ENCODE measurements at regions of chr17 and their contacts with region 1.

Region 1: GRCh38 chr17:70535986-70536385 is 366.7 kb downstream of the KCNJ2 start:
- DNase-seq: no peak
- ATAC-seq: no peak
- H3K4me3 ChIP-seq: no peak overlapping the region
- H3K4me3 Mint-ChIP-seq: no peak overlapping the region
- H3K27ac ChIP-seq: no peak overlapping the region
- H3K27ac Mint-ChIP-seq: no peak overlapping the region
- H3K4me1 ChIP-seq: no peaks in the 10 kb centered on the region
- H3K4me1 Mint-ChIP-seq: no peaks in the 10 kb centered on the region
- H3K27me3 ChIP-seq: no peaks in the 10 kb centered on the region
- H3K27me3 Mint-ChIP-seq: no peaks in the 10 kb centered on the region
- CTCF ChIP-seq: no peak

Region 2: DNA sequence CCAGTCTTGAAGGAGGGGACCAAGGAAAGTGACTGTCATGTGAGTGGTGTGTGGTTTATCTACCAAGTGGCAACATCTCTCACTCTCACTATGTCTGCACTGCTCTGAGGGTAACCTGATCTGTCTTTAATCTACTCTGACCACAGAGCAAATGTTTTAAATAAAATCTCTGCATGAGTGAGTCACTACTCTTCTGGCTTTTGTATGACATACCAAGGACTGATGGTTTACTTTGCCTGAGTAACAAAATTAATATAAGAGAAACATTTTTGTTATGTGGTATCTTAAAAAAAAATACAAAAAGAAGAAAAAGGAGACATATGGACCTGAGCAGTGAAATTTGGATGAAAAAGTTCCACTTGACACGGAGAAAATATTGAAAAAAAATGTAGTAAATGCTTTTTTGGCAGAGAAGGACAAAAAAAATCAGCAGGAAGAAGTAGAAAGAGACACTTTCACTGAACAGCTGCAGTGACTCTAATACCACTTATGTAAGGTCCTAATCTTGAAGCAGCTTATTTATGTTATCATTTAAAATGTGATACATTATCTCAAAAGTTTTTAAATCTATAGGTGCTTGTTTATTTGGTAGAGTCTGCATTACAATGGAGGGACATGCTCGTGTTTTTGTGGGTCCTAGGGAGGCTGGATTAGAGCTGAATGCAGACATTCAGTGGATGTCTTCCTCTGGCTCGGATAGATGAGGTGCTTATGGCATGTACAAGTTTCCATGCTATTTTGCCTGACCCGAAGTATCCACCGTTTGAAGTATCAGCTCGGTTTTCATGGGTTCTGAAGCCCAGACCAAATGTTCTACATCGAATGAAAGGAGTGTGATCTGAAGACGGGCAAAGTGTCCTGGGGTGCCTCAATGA is 880.8 kb before region 1 on chr17:
- CTCF ChIA-PET with region 1: no interaction called
- POLR2A ChIA-PET with region 1: no interaction called
- intact Hi-C with region 1: no loop called
- DNase-seq: no peak
- ATAC-seq: no peak
- H3K4me3 ChIP-seq: no peak overlapping the region
- H3K4me3 Mint-ChIP-seq: no peak overlapping the region
- H3K27ac ChIP-seq: no peak overlapping the region
- H3K27ac Mint-ChIP-seq: no peak overlapping the region
- H3K4me1 ChIP-seq: no peaks in the 10 kb centered on the region
- H3K4me1 Mint-ChIP-seq: no peaks in the 10 kb centered on the region
- H3K27me3 ChIP-seq: no peaks in the 10 kb centered on the region
- H3K27me3 Mint-ChIP-seq: no peaks in the 10 kb centered on the region
- CTCF ChIP-seq: no peak

Region 3: GRCh38 chr17:70478902-70479301 is 57.1 kb before region 1 on chr17:
- CTCF ChIA-PET with region 1: no interaction called
- POLR2A ChIA-PET with region 1: no interaction called
- intact Hi-C with region 1: loop called in 1 of 2 experiments (anchors 10 kb)
- DNase-seq: no peak
- ATAC-seq: no peak
- H3K4me3 ChIP-seq: no peak overlapping the region
- H3K4me3 Mint-ChIP-seq: no peak overlapping the region
- H3K27ac ChIP-seq: no peak overlapping the region
- H3K27ac Mint-ChIP-seq: no peak overlapping the region
- H3K4me1 ChIP-seq: no peaks in the 10 kb centered on the region
- H3K4me1 Mint-ChIP-seq: no peaks in the 10 kb centered on the region
- H3K27me3 ChIP-seq: no peaks in the 10 kb centered on the region
- H3K27me3 Mint-ChIP-seq: no peaks in the 10 kb centered on the region
- CTCF ChIP-seq: no peak

Region 4: GRCh38 chr17:70636517-70637133 is 100.6 kb after region 1 on chr17:
- CTCF ChIA-PET with region 1: no interaction called
- POLR2A ChIA-PET with region 1: no interaction called
- intact Hi-C with region 1: no loop called
- DNase-seq: peak in 3 of 14 experiments; percentile 5 to 37 (median 21)
- ATAC-seq: no peak
- H3K4me3 ChIP-seq: no peak overlapping the region
- H3K4me3 Mint-ChIP-seq: no peak overlapping the region
- H3K27ac ChIP-seq: no peak overlapping the region
- H3K27ac Mint-ChIP-seq: no peak overlapping the region
- H3K4me1 ChIP-seq: no peaks in the 10 kb centered on the region
- H3K4me1 Mint-ChIP-seq: no peaks in the 10 kb centered on the region
- H3K27me3 ChIP-seq: no peaks in the 10 kb centered on the region
- H3K27me3 Mint-ChIP-seq: peaks cover 7% of the 10 kb centered on the region
- CTCF ChIP-seq: peak; percentile 71